IMR-90 (cell line): ENCODE measurements at regions of chr9 and their contacts with region 1.

Region 1: DNA sequence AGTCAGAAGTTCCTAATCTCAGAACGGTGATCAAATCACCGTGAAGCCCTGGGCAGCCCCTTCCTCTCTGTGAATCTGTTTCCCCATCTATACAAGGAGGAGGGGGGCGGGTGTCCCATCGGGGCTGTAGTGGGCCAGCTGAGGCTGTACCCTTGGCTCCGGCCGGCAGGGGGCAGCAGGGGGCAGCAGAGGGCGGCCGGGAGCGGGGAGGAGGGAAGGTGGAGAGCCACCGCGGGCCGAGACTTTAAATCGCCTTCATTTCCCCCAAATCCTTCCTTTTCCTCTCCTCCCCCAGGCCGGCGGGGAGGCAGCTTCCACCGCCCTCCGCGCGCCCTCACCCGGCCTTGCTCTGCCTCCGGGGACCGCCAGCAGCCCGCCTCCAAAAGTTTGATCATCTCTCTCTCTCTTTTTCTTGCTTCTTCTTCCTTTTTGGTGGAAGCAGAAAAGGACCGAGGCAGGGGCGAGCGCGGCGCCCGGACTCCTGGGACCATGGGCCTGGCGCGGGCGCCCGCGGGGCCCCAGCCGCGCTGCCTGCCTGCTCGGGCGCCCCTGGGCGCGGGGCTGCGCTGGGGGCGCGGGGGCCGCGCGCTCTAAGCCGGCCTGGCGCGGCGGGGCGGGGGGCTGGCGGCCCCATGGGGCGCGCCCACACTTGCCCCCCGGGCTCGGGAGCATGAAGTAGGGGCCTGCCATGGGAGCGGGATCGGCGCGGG is at the start of gene COL27A1:
- DNase-seq: peak; percentile 70
- ATAC-seq: peak; percentile 86
- H3K4me3 ChIP-seq: peak within 1 kb of the TSS; percentile 94
- H3K27ac ChIP-seq: peak within 1 kb of the TSS; percentile 78
- H3K4me1 ChIP-seq: peaks cover 10% of the 10 kb centered on the region
- H3K27me3 ChIP-seq: peaks cover 25% of the 10 kb centered on the region
- CTCF ChIP-seq: peak; percentile 94
- POLR2A ChIP-seq: no peak
- RAD21 ChIP-seq: peak; percentile 87
- total RNA-seq, gene COL27A1: 2.2 and 3.2 TPM in 2 replicates

Region 2: GRCh38 chr9:114108016-114108833 is 47.2 kb before region 1 on chr9:
- CTCF ChIA-PET with region 1: interaction called, 6 read pairs
- POLR2A ChIA-PET with region 1: no interaction called
- dilution Hi-C with region 1: no loop called
- in situ Hi-C with region 1: no loop called
- intact Hi-C with region 1: loop called (anchors 2 kb)
- DNase-seq: peak; percentile 77
- ATAC-seq: peak; percentile 100
- H3K4me3 ChIP-seq: no peak overlapping the region
- H3K27ac ChIP-seq: no peak overlapping the region
- H3K4me1 ChIP-seq: peaks cover 6% of the 10 kb centered on the region
- H3K27me3 ChIP-seq: peaks cover 9% of the 10 kb centered on the region
- CTCF ChIP-seq: peak; percentile 99
- POLR2A ChIP-seq: peak; percentile 55; the same call in 1 of the 2 replicates
- RAD21 ChIP-seq: peak; percentile 98

Region 3: GRCh38 chr9:114224247-114224610 is 68.8 kb after region 1 on chr9:
- CTCF ChIA-PET with region 1: no interaction called
- POLR2A ChIA-PET with region 1: no interaction called
- dilution Hi-C with region 1: no loop called
- in situ Hi-C with region 1: no loop called
- intact Hi-C with region 1: loop called (anchors 2 kb)
- DNase-seq: peak; percentile 72
- ATAC-seq: 0 out of 2 replicates have a peak, but pooled peaks have one; percentile 8
- H3K4me3 ChIP-seq: no peak overlapping the region
- H3K27ac ChIP-seq: no peak overlapping the region
- H3K4me1 ChIP-seq: peaks cover 31% of the 10 kb centered on the region
- H3K27me3 ChIP-seq: no peaks in the 10 kb centered on the region
- CTCF ChIP-seq: no peak
- POLR2A ChIP-seq: no peak
- RAD21 ChIP-seq: no peak

Region 4: DNA sequence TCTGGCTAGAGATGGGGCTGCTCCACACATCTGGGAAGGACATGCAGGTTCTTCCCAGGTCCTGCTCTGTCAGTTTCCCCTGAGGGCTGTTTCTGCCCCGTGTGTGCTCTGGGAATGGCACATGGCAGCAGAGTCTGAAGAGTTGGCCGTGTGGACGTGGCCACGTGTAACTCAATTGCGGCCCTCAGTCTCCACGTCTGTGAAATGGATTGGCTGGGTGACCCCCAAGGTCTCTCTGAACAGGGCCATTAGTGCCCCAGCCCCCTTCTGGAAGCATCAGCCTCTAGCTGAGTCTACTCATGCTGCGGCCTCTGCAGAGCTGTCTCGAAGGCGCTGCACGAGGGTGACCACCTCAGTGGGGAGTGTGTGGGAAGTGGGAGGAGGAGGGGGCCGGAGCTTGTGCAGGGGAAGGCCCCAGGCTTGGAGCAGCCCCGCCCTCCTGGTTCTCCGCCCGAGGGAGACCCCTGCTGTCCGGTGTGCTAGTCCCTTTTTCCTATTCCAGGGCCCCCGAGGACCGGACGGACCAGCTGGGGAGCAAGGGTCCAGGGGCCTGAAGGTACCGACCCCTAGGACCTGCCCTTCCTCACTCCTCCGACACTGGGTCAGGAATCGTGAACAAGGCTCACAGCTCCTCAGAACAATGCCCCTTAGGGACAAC is 108.6 kb after region 1 on chr9:
- CTCF ChIA-PET with region 1: interaction called, 4 read pairs
- POLR2A ChIA-PET with region 1: no interaction called
- dilution Hi-C with region 1: no loop called
- in situ Hi-C with region 1: no loop called
- intact Hi-C with region 1: loop called (anchors 1 kb)
- DNase-seq: no peak
- ATAC-seq: peak; percentile 65
- H3K4me3 ChIP-seq: no peak overlapping the region
- H3K27ac ChIP-seq: no peak overlapping the region
- H3K4me1 ChIP-seq: peaks cover 2% of the 10 kb centered on the region; the same call in 1 of the 2 replicates
- H3K27me3 ChIP-seq: no peaks in the 10 kb centered on the region
- CTCF ChIP-seq: peak; percentile 34
- POLR2A ChIP-seq: no peak
- RAD21 ChIP-seq: peak; percentile 29; the same call in 1 of the 2 replicates

Region 5: GRCh38 chr9:114291064-114291474 is 135.7 kb after region 1 on chr9:
- CTCF ChIA-PET with region 1: interaction called, 8 read pairs
- POLR2A ChIA-PET with region 1: no interaction called
- dilution Hi-C with region 1: no loop called
- in situ Hi-C with region 1: loop called (anchors 5 kb)
- intact Hi-C with region 1: loop called (anchors 1 kb)
- DNase-seq: peak; percentile 67
- ATAC-seq: peak; percentile 75
- H3K4me3 ChIP-seq: no peak overlapping the region
- H3K27ac ChIP-seq: no peak overlapping the region
- H3K4me1 ChIP-seq: peaks cover 9% of the 10 kb centered on the region
- H3K27me3 ChIP-seq: no peaks in the 10 kb centered on the region
- CTCF ChIP-seq: peak; percentile 91
- POLR2A ChIP-seq: no peak
- RAD21 ChIP-seq: peak; percentile 88